ENCODE measurements at regions of chr21 and their contacts with region 1.

Region 1: DNA sequence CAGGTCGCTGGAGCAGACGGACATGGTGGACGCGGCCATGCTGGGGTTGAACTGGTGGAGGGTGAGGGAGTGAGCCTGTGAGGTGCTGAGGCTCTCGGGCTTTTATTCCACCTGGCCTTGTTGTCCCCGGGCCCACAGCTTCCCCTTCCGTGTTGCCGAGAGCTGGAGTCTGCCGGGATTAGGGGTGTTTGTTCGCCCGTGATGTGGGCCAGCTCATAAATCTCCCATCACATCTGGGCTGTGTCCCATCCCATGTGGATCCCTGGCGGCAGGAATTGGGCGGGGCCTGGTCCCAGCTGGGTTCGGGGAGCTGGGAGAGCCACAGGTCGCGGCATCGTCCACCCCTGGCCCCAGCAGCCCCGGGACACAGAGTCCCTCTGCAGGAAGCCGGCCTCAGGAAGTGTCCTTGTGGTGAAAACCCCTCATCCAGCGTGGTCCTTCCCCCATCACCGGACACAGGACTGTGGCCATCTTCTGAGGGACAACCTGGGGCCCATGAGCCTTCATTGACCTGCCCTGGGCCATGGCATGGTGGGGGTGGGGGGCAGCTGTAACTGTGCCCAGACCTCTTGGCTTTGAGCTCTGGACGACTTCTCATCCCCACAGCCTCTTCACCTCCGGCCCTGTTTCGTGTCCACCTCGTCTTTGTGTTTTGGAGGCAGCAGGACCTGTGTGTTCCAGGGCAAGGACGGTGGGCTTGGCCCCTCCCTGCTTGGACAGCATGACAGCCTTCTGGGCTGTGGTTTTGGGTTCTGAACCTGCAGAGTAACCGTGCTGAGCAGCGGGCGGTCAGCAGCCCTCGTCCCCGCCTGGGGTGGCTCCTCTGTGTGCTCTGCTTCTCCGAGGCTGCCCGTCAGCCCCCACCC is at the start of gene KRTAP10-6:
- DNase-seq: no peak
- ATAC-seq: no peak
- H3K4me3 ChIP-seq: no peak within 1 kb of the TSS
- H3K4me3 Mint-ChIP-seq: peak within 1 kb of the TSS in 1 of 10 donors; percentile 12
- H3K27ac ChIP-seq: no peak within 1 kb of the TSS
- H3K27ac Mint-ChIP-seq: peak within 1 kb of the TSS in 1 of 9 donors; percentile 70
- H3K4me1 ChIP-seq: no peaks in the 10 kb centered on the region
- H3K4me1 Mint-ChIP-seq: peaks cover 0 to 6% (median 2%) of the 10 kb centered on the region in 7 donors
- H3K27me3 ChIP-seq: no peaks in the 10 kb centered on the region
- H3K27me3 Mint-ChIP-seq: peaks cover 0 to 17% (median 5%) of the 10 kb centered on the region in 5 donors
- total RNA-seq, gene KRTAP10-6: not detected

Region 2: GRCh38 chr21:44572966-44573583 is 19.6 kb before region 1 on chr21:
- CTCF ChIA-PET with region 1: no interaction called
- POLR2A ChIA-PET with region 1: no interaction called
- intact Hi-C with region 1: loop called in 1 of 2 experiments (anchors 1 kb)
- DNase-seq: no peak
- ATAC-seq: no peak
- H3K4me3 ChIP-seq: no peak overlapping the region
- H3K4me3 Mint-ChIP-seq: no peak overlapping the region
- H3K27ac ChIP-seq: no peak overlapping the region
- H3K27ac Mint-ChIP-seq: peak overlapping the region in 1 of 9 donors; percentile 59
- H3K4me1 ChIP-seq: no peaks in the 10 kb centered on the region
- H3K4me1 Mint-ChIP-seq: peaks cover 0 to 15% (median 5%) of the 10 kb centered on the region in 7 donors
- H3K27me3 ChIP-seq: no peaks in the 10 kb centered on the region
- H3K27me3 Mint-ChIP-seq: peaks cover 0 to 7% (median 4%) of the 10 kb centered on the region in 5 donors

Region 3: DNA sequence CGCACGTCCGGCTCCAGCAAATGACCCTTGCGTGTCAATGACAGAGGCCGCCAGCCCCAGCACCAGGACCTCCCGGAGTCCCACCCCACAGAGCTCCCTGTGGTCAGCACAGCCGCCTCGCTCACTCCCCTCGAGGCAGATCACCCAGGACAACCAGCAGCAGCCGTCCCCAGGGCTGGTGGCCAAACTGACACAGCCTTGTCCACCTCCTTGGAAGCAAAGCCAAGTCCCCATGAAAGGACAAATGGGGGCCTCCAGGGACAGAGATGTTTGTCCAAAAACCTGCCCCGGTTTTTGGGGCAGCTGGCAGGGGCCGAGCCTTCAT is 46.6 kb after region 1 on chr21:
- CTCF ChIA-PET with region 1: no interaction called
- POLR2A ChIA-PET with region 1: no interaction called
- intact Hi-C with region 1: loop called in 1 of 2 experiments (anchors 2 kb)
- DNase-seq: no peak
- ATAC-seq: no peak
- H3K4me3 ChIP-seq: no peak overlapping the region
- H3K4me3 Mint-ChIP-seq: no peak overlapping the region
- H3K27ac ChIP-seq: no peak overlapping the region
- H3K27ac Mint-ChIP-seq: no peak overlapping the region
- H3K4me1 ChIP-seq: no peaks in the 10 kb centered on the region
- H3K4me1 Mint-ChIP-seq: peaks cover 0 to 6% (median 0%) of the 10 kb centered on the region in 7 donors
- H3K27me3 ChIP-seq: no peaks in the 10 kb centered on the region
- H3K27me3 Mint-ChIP-seq: peaks cover 0 to 14% (median 8%) of the 10 kb centered on the region in 5 donors

Region 4: GRCh38 chr21:44792702-44793591 is 200.3 kb after region 1 on chr21:
- CTCF ChIA-PET with region 1: no interaction called
- POLR2A ChIA-PET with region 1: no interaction called
- intact Hi-C with region 1: no loop called
- DNase-seq: peak in 8 of 9 donors; percentile 37 to 73 (median 62)
- ATAC-seq: peak; percentile 96
- H3K4me3 ChIP-seq: no peak overlapping the region
- H3K4me3 Mint-ChIP-seq: no peak overlapping the region
- H3K27ac ChIP-seq: no peak overlapping the region
- H3K27ac Mint-ChIP-seq: peak overlapping the region; percentile 2 to 83 (median 40)
- H3K4me1 ChIP-seq: peaks cover 7 to 10% of the 10 kb centered on the region in 2 donors
- H3K4me1 Mint-ChIP-seq: peaks cover 17 to 64% (median 53%) of the 10 kb centered on the region in 7 donors
- H3K27me3 ChIP-seq: no peaks in the 10 kb centered on the region
- H3K27me3 Mint-ChIP-seq: no peaks in the 10 kb centered on the region

Measured in naive thymus-derived CD4-positive, alpha-beta T cell (primary cell).